Activated CD4-positive, alpha-beta T cell treated with anti-CD3 and anti-CD28 coated beads, Interleukin-2, amount 10 ng/mL, durations not matched to agents 24 days and 14 days (primary cell): ENCODE measurements at regions of chr7 and their contacts with region 1.

Region 1: DNA sequence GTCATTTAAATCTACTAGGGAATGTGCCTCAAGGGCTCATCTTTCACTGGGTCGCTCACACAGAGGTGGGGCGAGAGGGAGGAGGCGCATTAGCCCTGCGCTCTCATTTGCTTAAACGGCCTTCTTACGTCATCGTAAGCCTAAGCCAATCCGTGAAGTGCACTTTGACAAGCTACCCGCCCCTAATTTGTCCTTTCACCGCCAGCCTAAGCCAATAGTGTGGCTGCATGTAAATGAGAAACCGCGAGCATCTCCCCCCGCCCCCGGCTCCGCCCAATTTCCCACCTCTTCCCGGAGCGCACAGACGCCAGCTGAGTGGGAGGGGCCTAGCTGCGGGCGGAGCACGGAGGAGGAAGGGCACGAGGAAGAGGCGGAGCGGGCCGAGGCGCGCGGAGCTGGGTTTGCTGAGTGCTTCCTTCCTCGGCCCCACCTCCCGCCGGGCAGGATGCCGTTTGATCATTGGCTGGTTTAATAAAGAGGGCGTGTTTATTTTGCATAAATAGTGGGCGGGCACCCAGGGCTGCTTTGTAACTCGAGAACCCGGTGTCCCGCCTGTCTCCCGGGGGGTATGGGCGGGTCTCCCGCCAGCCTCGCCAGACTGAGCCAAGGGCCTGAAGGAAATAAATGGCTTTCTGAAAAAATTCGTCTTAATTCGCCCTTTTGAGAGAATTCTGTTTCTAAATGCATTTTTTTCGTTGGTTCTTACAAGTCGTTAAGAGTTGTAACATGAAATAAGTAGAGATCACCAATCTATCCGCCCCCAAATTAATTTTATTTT is 289.5 kb upstream of the NFE2L3 start:
- DNase-seq: peak; percentile 99
- H3K4me3 Mint-ChIP-seq: peak overlapping the region; percentile 76
- H3K27ac Mint-ChIP-seq: peak overlapping the region; percentile 75
- H3K4me1 Mint-ChIP-seq: peaks cover 30% of the 10 kb centered on the region
- H3K27me3 Mint-ChIP-seq: peaks cover 68% of the 10 kb centered on the region

Region 2: DNA sequence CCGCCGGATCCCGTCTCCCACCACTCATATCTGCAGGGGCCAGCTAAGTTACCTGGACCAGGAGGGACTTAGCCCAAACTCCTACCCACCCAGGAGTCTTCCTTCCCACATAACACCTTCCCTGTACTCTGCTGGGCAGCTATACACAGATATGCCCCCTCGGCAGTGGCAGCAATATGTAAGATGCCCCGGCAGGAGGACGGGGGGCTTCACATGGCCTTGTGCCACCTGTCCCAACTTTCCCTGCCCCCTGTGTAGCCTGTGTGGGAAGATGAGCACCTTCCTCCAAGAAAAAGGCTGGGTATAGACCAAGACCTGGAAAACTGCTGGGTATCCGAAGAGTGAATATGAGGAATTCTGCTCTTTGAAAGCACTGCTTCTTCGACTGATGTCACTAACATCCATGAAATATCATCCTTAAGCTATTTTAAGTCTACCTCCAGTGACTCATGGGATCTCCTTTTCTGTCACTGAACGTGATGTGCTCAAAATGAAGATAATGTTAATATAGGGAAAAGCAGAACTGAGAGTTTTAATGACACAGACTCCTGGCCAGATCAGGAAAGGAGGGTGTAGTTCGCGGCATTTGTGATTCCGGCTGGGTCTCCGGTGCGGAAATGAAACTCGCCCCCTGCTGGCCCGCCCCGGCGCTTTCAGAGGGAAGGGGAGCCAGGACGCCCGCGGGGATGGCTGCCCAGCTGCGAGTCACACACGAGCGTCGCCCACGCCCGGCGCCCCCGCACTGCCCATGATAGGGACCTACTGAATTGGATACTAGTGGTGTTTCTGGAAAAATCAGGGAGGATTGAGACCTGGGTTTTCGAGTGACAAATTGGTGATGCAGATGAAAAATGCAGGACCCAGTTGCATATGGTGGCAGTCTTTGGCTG is 32.7 kb after region 1 on chr7:
- intact Hi-C with region 1: no loop called
- DNase-seq: peak; percentile 90
- H3K4me3 Mint-ChIP-seq: peak overlapping the region; percentile 75
- H3K27ac Mint-ChIP-seq: no peak overlapping the region
- H3K4me1 Mint-ChIP-seq: peaks cover 25% of the 10 kb centered on the region
- H3K27me3 Mint-ChIP-seq: peaks cover 17% of the 10 kb centered on the region

Region 3: GRCh38 chr7:25951031-25951948 is 88.8 kb after region 1 on chr7:
- intact Hi-C with region 1: loop called (anchors 1 kb)
- DNase-seq: peak; percentile 96
- H3K4me3 Mint-ChIP-seq: peak overlapping the region; percentile 90
- H3K27ac Mint-ChIP-seq: peak overlapping the region; percentile 86
- H3K4me1 Mint-ChIP-seq: peaks cover 14% of the 10 kb centered on the region
- H3K27me3 Mint-ChIP-seq: peaks cover 15% of the 10 kb centered on the region

Region 4: DNA sequence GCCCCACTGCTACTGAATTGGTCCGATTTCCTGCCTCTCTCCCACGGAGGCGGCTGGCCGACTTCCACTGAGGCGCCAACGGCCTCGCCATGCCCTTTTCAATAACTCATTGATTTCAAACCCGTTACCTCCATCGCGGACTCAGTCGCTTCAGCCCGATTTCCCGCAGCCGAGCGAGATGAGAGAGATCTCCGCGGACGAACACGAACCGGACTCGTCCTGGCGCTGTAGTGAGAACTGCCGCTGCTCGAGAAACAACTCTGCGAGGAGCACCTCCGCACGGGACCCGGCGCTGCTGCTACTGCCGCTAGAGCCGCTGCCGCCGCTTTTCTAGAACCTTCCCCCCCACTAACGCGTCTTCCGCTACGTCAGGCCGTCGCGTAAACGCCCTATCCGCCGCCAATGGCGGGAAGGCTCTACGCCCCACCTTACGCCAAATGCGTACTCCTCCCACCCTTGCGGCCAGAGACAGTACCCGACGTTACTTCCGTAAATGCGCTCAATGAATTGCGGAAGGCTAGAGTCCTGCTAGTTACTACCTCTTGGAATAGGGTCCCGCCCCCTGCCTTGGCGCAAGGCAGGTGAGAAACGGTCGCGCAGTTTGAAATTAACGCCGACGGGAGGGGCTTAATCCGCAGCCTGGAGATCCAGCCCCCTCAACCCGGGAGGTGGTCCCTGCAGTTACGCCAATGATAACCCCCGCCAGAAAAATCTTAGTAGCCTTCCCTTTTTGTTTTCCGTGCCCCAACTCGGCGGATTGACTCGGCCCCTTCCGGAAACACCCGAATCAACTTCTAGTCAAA is 338.2 kb after region 1 on chr7 and contains the start of gene HNRNPA2B1:
- intact Hi-C with region 1: loop called (anchors 1 kb)
- DNase-seq: peak; percentile 100
- H3K4me3 Mint-ChIP-seq: peak within 1 kb of the TSS; percentile 100
- H3K27ac Mint-ChIP-seq: peak within 1 kb of the TSS; percentile 99
- H3K4me1 Mint-ChIP-seq: peaks cover 51% of the 10 kb centered on the region
- H3K27me3 Mint-ChIP-seq: peaks cover 7% of the 10 kb centered on the region
- total RNA-seq, gene HNRNPA2B1: 862 and 873 TPM in 2 replicates

Region 5: DNA sequence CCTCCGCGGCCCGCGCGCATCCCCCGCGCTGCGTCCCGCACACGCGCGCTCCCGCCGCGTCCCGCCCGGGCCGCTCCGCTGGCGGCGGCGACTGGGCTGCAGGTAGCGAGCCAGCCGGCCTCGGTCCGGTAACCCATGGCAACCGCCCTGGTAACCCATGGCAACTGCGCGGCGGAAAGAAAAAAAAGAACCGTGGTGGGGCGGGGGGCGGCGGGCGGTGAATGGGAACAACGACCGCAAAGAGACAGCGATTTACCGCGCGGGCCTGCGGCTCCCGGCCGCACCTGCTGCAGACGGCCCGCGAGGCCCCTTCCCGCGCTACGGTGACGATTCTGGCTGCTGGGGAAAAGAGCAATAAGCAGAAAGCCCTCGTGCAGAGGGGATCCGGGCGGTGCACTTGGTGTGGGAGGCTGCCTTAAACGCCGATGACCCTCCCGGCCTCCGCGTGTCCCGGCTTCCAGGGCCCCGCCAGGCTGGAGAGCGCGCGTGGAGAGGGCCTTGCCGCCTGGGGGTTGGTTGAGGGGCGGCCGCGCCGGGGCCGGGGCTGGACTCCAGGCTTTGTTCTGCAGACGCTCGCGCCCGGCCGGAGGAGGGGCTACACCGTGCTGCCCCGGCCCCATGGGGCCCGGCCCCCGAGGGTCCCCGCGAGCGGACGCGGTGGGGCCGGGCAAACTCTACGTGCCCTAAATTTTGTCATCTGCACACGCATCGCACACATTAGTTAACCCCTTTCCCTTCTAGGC is 513.9 kb after region 1 on chr7:
- intact Hi-C with region 1: loop called (anchors 10 kb)
- DNase-seq: peak; percentile 84
- H3K4me3 Mint-ChIP-seq: peak overlapping the region; percentile 84
- H3K27ac Mint-ChIP-seq: peak overlapping the region; percentile 88
- H3K4me1 Mint-ChIP-seq: peaks cover 5% of the 10 kb centered on the region
- H3K27me3 Mint-ChIP-seq: peaks cover 38% of the 10 kb centered on the region

Region 6: DNA sequence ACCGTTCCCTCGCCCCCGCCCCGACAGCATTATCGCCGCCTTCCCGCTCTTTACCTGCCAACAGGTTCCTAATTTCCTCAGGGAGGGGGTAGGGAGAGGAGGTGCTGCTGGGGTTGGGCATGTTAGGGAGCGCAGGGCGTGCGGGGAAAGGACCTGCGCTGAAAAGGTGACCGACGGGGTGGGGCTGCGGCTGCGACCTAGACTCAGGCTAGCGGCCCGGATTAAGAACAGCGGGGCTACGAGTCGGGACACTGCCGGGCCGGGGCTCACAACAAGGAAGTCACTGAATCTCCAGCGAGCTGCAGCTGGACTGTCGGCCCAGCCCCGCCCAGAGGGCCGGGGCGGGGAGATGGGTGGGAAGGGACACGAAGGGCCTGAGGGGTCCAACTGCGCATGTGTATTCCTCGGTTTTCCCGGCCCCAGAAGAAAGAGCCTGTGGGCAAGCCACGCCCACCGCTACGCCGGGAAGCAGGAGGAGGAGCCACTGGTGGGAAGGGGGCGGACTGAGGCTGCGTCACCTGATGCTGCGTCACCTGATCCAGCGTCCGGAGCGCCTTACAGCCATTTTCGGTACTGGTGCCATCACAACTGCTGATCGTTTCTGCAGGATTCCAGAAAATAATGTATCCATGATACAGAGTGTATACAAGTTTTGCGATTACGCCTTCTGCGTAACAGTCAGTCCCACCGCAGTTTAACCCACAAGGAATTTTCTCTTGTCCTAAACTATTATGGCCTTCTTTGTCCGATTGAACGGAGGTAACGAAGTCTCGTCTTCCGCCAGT is 1002.1 kb after region 1 on chr7 and contains the start of gene SKAP2:
- intact Hi-C with region 1: loop called (anchors 2 kb)
- DNase-seq: peak; percentile 96
- H3K4me3 Mint-ChIP-seq: peak within 1 kb of the TSS; percentile 93
- H3K27ac Mint-ChIP-seq: peak within 1 kb of the TSS; percentile 73
- H3K4me1 Mint-ChIP-seq: peaks cover 16% of the 10 kb centered on the region
- H3K27me3 Mint-ChIP-seq: peaks cover 39% of the 10 kb centered on the region
- total RNA-seq, gene SKAP2: 3.6 and 4.6 TPM in 2 replicates

Region 7: GRCh38 chr7:27095897-27096767 is 1233.7 kb after region 1 on chr7 and contains the start of gene HOXA1:
- intact Hi-C with region 1: loop called (anchors 2 kb)
- DNase-seq: peak; percentile 88
- H3K4me3 Mint-ChIP-seq: peak within 1 kb of the TSS; percentile 85
- H3K27ac Mint-ChIP-seq: peak within 1 kb of the TSS; percentile 62
- H3K4me1 Mint-ChIP-seq: peaks cover 17% of the 10 kb centered on the region
- H3K27me3 Mint-ChIP-seq: peaks cover 90% of the 10 kb centered on the region
- total RNA-seq, gene HOXA1: 0.09 and 0.16 TPM in 2 replicates

Region 8: GRCh38 chr7:27242555-27243339 is 1380.3 kb after region 1 on chr7 and contains the start of gene EVX1:
- intact Hi-C with region 1: loop called (anchors 5 kb)
- DNase-seq: no peak
- H3K4me3 Mint-ChIP-seq: no peak within 1 kb of the TSS
- H3K27ac Mint-ChIP-seq: peak within 1 kb of the TSS; percentile 16
- H3K4me1 Mint-ChIP-seq: no peaks in the 10 kb centered on the region
- H3K27me3 Mint-ChIP-seq: peaks cover 83% of the 10 kb centered on the region
- total RNA-seq, gene EVX1: not detected in 2 replicates